ENCODE measurements at regions of chr1 and their contacts with region 1.

Region 1: GRCh38 chr1:9234223-9235095 is at the start of gene H6PD:
- DNase-seq: peak; percentile 95
- ATAC-seq: peak; percentile 83
- total RNA-seq, gene H6PD: 18.7 TPM

Region 2: GRCh38 chr1:9128520-9129265 is 105.8 kb before region 1 on chr1 and contains the start of gene GPR157:
- intact Hi-C with region 1: loop called (anchors 5 kb)
- DNase-seq: peak; percentile 98
- ATAC-seq: peak; percentile 96
- total RNA-seq, gene GPR157: 49.0 TPM

Region 3: GRCh38 chr1:9249534-9250410 is 15.3 kb after region 1 on chr1:
- intact Hi-C with region 1: loop called (anchors 2 kb)
- DNase-seq: peak; percentile 79
- ATAC-seq: peak; percentile 63

Measured in Right ventricle myocardium inferior (tissue), 1 donor.